ENCODE measurements at regions of chr12 and their contacts with region 1.

Region 1: GRCh38 chr12:56581418-56582145 is 48.5 kb downstream of the BAZ2A start:
- DNase-seq: peak in 1 of 5 donors; percentile 53
- H3K4me3 ChIP-seq: no peak overlapping the region
- H3K4me3 Mint-ChIP-seq: peak overlapping the region in 2 of 8 donors; percentile 17 to 69
- H3K27ac ChIP-seq: no peak overlapping the region
- H3K27ac Mint-ChIP-seq: peak overlapping the region; percentile 28 to 79 (median 69)
- H3K4me1 ChIP-seq: peaks cover 16% of the 10 kb centered on the region
- H3K4me1 Mint-ChIP-seq: peaks cover 10 to 18% (median 14%) of the 10 kb centered on the region in 4 donors
- H3K27me3 ChIP-seq: no peaks in the 10 kb centered on the region
- H3K27me3 Mint-ChIP-seq: no peaks in the 10 kb centered on the region

Region 2: DNA sequence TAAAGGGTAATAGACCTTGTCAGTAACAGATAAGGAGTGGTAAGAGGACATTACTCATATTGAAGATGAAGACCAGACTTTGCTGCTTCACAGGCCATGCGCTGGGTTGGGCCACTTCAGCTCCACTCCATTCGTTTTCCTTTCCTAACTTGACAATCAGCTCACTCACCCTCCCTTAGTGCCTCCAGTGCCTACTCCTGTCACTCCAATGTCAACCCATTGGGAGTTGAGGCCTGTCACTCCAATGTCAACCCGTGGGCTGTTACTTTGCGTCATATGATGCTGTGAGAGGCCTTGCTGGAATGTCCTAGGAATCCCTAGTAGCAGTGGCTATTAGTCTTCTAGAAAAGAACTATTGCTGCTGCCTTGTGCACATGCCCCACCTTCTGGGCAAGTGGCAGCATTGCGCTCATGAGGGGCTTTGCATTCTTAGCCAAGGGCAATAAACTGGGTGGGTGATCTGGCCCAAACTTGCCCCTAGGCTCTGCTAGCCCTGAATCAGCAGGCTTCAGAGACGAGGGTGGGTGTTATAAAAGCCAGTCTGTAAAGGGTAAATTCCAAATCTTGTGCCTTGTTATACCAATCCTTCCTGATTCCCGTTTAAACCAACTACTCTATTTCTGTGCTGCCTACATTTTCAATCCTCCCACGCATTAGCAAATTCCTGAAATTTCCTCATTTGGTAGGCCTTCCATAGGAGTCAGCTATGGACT is 12.5 kb after region 1 on chr12:
- CTCF ChIA-PET with region 1: interaction called, 10 read pairs
- POLR2A ChIA-PET with region 1: no interaction called
- intact Hi-C with region 1: no loop called
- DNase-seq: peak; percentile 44 to 71 (median 53)
- H3K4me3 ChIP-seq: no peak overlapping the region
- H3K4me3 Mint-ChIP-seq: no peak overlapping the region
- H3K27ac ChIP-seq: no peak overlapping the region
- H3K27ac Mint-ChIP-seq: peak overlapping the region in 3 of 7 donors; percentile 2 to 77 (median 49)
- H3K4me1 ChIP-seq: no peaks in the 10 kb centered on the region
- H3K4me1 Mint-ChIP-seq: peaks cover 0 to 4% (median 2%) of the 10 kb centered on the region in 4 donors
- H3K27me3 ChIP-seq: no peaks in the 10 kb centered on the region
- H3K27me3 Mint-ChIP-seq: no peaks in the 10 kb centered on the region

Region 3: DNA sequence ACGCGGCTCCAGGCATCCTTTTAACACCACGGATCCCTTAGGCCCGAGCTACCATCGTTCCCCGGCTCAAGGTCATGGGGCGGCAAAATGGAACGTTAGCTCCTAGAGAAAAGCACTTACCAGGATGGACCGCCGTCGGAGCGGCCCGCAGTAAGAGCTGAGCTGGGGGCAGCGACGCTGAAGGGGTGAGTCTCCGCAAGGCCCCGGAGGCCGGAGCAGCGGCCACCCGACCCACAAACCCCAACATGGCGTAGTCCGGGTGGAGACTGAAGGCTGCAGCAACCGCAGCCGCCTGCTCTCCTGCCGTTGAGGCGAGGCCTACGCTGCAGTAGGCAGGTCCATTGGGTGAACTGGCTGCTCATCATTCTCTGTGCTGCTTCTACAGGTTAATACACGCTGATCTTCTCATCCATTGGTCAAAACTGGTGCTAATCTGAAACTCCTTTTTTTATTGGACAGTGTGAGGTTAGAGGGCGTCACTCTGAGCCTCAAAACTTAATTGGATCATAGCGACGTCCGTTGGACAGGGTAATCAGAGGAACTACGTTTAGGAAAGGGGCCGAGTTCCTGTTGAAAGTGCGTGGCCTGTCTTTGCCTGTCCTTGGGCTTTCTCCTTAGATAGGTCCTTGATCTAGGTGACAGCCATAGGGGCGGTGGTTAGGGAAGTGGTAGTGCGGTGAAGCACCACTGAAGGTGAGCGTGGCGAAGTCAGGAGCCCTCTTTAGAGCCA is 64.3 kb after region 1 on chr12 and contains the start of gene ATP5F1B:
- CTCF ChIA-PET with region 1: no interaction called
- POLR2A ChIA-PET with region 1: no interaction called
- intact Hi-C with region 1: no loop called
- DNase-seq: peak; percentile 91 to 97 (median 96)
- H3K4me3 ChIP-seq: peak within 1 kb of the TSS; percentile 95 to 99
- H3K4me3 Mint-ChIP-seq: peak within 1 kb of the TSS; percentile 68 to 99 (median 97)
- H3K27ac ChIP-seq: peak within 1 kb of the TSS; percentile 91
- H3K27ac Mint-ChIP-seq: peak within 1 kb of the TSS; percentile 78 to 99 (median 98)
- H3K4me1 ChIP-seq: peaks cover 33% of the 10 kb centered on the region
- H3K4me1 Mint-ChIP-seq: peaks cover 18 to 43% (median 30%) of the 10 kb centered on the region in 4 donors
- H3K27me3 ChIP-seq: no peaks in the 10 kb centered on the region
- H3K27me3 Mint-ChIP-seq: no peaks in the 10 kb centered on the region
- total RNA-seq, gene ATP5F1B: 243 to 256 TPM

Region 4: DNA sequence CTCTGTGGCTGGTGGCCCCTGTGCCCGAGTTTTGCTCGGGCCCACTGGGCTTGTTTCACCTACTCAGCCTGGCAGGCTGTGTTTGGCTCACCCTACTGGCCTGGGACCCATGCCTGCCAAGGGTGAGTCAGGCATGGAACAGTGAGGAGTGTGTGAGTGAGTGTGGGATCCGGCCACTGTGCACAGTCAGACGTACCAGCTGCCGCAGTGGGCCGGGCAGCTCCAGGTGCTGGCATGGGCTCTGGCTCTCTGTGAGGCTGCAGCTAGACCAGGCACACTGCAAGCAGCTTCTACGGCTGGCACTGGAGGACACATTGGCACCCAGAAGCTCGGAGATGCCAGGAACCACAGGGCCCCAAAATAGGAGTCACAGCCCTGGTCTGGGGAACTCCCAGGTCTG is 222.2 kb after region 1 on chr12:
- CTCF ChIA-PET with region 1: no interaction called
- POLR2A ChIA-PET with region 1: no interaction called
- intact Hi-C with region 1: no loop called
- DNase-seq: no peak
- H3K4me3 ChIP-seq: no peak overlapping the region
- H3K4me3 Mint-ChIP-seq: no peak overlapping the region
- H3K27ac ChIP-seq: no peak overlapping the region
- H3K27ac Mint-ChIP-seq: no peak overlapping the region
- H3K4me1 ChIP-seq: no peaks in the 10 kb centered on the region
- H3K4me1 Mint-ChIP-seq: no peaks in the 10 kb centered on the region
- H3K27me3 ChIP-seq: no peaks in the 10 kb centered on the region
- H3K27me3 Mint-ChIP-seq: peaks cover 0 to 2% of the 10 kb centered on the region in 2 donors